Ovary (tissue), 10 donors: ENCODE measurements at regions of chr1 and their contacts with region 1.

Region 1: GRCh38 chr1:66271216-66271903 is 262.6 kb upstream of the SGIP1 start:
- DNase-seq: peak; percentile 77 to 90 (median 82)
- H3K4me3 ChIP-seq: peak overlapping the region; percentile 20
- H3K27ac ChIP-seq: peak overlapping the region in 1 of 2 donors; percentile 77
- H3K4me1 ChIP-seq: peaks cover 9% of the 10 kb centered on the region
- H3K27me3 ChIP-seq: no peaks in the 10 kb centered on the region
- CTCF ChIP-seq: no peak
- EP300 ChIP-seq: peak; percentile 92
- POLR2A ChIP-seq: peak; percentile 24

Region 2: DNA sequence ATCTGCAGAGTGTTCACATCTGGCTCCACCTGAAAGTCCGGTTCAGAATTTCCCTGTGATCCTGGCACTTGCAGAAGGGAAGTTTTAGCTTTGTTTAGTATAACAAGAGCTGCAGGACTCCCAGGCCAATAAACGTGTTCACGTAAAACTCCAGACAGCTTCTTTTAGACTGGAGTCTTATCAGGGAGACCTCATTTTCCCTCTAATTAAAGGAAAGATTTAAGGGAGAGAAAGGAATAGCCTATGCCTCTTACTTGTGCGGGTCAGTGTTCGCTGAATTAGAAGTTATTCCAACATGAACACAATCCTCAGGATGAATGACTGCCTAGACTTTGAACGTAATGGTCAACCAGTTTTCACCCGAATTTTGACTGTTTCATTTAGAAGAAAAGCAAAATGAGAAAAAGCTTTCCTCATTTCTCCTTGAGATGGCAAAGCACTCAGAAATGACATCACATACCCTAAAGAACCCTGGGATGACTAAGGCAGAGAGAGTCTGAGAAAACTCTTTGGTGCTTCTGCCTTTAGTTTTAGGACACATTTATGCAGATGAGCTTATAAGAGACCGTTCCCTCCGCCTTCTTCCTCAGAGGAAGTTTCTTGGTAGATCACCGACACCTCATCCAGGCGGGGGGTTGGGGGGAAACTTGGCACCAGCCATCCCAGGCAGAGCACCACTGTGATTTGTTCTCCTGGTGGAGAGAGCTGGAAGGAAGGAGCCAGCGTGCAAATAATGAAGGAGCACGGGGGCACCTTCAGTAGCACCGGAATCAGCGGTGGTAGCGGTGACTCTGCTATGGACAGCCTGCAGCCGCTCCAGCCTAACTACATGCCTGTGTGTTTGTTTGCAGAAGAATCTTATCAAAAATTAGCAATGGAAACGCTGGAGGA is 60.5 kb after region 1 on chr1:
- intact Hi-C with region 1: loop called in 2 of 4 experiments (anchors 10 kb)
- DNase-seq: peak; percentile 25 to 61 (median 53)
- H3K4me3 ChIP-seq: peak overlapping the region; percentile 38
- H3K27ac ChIP-seq: peak overlapping the region; percentile 4 to 44
- H3K4me1 ChIP-seq: peaks cover 2% of the 10 kb centered on the region
- H3K27me3 ChIP-seq: no peaks in the 10 kb centered on the region
- CTCF ChIP-seq: no peak
- EP300 ChIP-seq: no peak
- POLR2A ChIP-seq: no peak

Region 3: GRCh38 chr1:66924756-66925557 is 653.6 kb after region 1 on chr1 and contains the starts of genes DNAI4 and MIER1:
- intact Hi-C with region 1: loop called in 1 of 4 experiments (anchors 10 kb)
- DNase-seq: peak; percentile 97 to 98 (median 98)
- H3K4me3 ChIP-seq: peak within 1 kb of the TSS; percentile 79
- H3K27ac ChIP-seq: peak within 1 kb of the TSS; percentile 48 to 81
- H3K4me1 ChIP-seq: peaks cover 7% of the 10 kb centered on the region
- H3K27me3 ChIP-seq: no peaks in the 10 kb centered on the region
- CTCF ChIP-seq: peak in 2 of 3 donors; percentile 25 to 45
- EP300 ChIP-seq: peak; percentile 25
- POLR2A ChIP-seq: peak; percentile 57
- total RNA-seq, gene DNAI4: 21.7 to 52.6 (median 31.0) TPM
- total RNA-seq, gene MIER1: 33.2 to 51.2 (median 46.8) TPM